ENCODE measurements at regions of chr1 and their contacts with region 1.

Region 1: GRCh38 chr1:153510984-153511410 is 24.8 kb downstream of the S100A6 start:
- DNase-seq: peak; percentile 89
- ATAC-seq: peak; percentile 88
- H3K4me3 ChIP-seq: no peak overlapping the region
- H3K27ac ChIP-seq: no peak overlapping the region
- H3K4me1 ChIP-seq: peaks cover 11% of the 10 kb centered on the region
- H3K27me3 ChIP-seq: no peaks in the 10 kb centered on the region
- CTCF ChIP-seq: peak; percentile 92

Region 2: GRCh38 chr1:153422450-153423068 is 88.4 kb before region 1 on chr1:
- intact Hi-C with region 1: no loop called
- DNase-seq: peak; percentile 77
- ATAC-seq: peak; percentile 79
- H3K4me3 ChIP-seq: no peak overlapping the region
- H3K27ac ChIP-seq: no peak overlapping the region
- H3K4me1 ChIP-seq: no peaks in the 10 kb centered on the region
- H3K27me3 ChIP-seq: no peaks in the 10 kb centered on the region
- CTCF ChIP-seq: no peak

Region 3: GRCh38 chr1:153749408-153750005 is 238.5 kb after region 1 on chr1:
- intact Hi-C with region 1: loop called (anchors 10 kb)
- DNase-seq: peak; percentile 91
- ATAC-seq: peak; percentile 96
- H3K4me3 ChIP-seq: no peak overlapping the region
- H3K27ac ChIP-seq: peak overlapping the region; percentile 85
- H3K4me1 ChIP-seq: peaks cover 39% of the 10 kb centered on the region
- H3K27me3 ChIP-seq: no peaks in the 10 kb centered on the region
- CTCF ChIP-seq: peak; percentile 96